ENCODE measurements at regions of chr2 and their contacts with region 1.

Region 1: GRCh38 chr2:65432227-65433190 is at the start of gene SPRED2:
- H3K4me3 ChIP-seq: peak within 1 kb of the TSS; percentile 83
- H3K27ac ChIP-seq: peak within 1 kb of the TSS; percentile 95
- H3K4me1 ChIP-seq: peaks cover 17% of the 10 kb centered on the region
- CTCF ChIP-seq: 0 out of 2 replicates have a peak, but pooled peaks have one; percentile 25

Region 2: GRCh38 chr2:65407240-65407639 is 25.3 kb before region 1 on chr2:
- CTCF ChIA-PET with region 1: no interaction called
- POLR2A ChIA-PET with region 1: interaction called, 13 read pairs
- H3K4me3 ChIP-seq: no peak overlapping the region
- H3K27ac ChIP-seq: no peak overlapping the region
- H3K4me1 ChIP-seq: peaks cover 34% of the 10 kb centered on the region
- CTCF ChIP-seq: no peak

Region 3: GRCh38 chr2:65420712-65421431 is 11.6 kb before region 1 on chr2:
- CTCF ChIA-PET with region 1: interaction called, 4 read pairs
- POLR2A ChIA-PET with region 1: interaction called, 14 read pairs
- H3K4me3 ChIP-seq: no peak overlapping the region
- H3K27ac ChIP-seq: no peak overlapping the region
- H3K4me1 ChIP-seq: peaks cover 12% of the 10 kb centered on the region; the same call in 1 of the 2 replicates
- CTCF ChIP-seq: no peak

Region 4: GRCh38 chr2:65443509-65444201 is 11.1 kb after region 1 on chr2:
- CTCF ChIA-PET with region 1: no interaction called
- POLR2A ChIA-PET with region 1: no interaction called
- H3K4me3 ChIP-seq: no peak overlapping the region
- H3K27ac ChIP-seq: no peak overlapping the region
- H3K4me1 ChIP-seq: no peaks in the 10 kb centered on the region
- CTCF ChIP-seq: no peak

Measured in HEK293 (cell line).